GM13976 (cell line): ENCODE measurements at regions of chr22 and their contacts with region 1.

Region 1: GRCh38 chr22:38051900-38052862 is 5.0 kb upstream of the PICK1 start:
- DNase-seq: peak; percentile 95
- CTCF ChIP-seq: peak; percentile 83

Region 2: GRCh38 chr22:38569972-38570778 is 518.0 kb after region 1 on chr22 and contains the start of gene DMC1:
- in situ Hi-C with region 1: loop called (anchors 10 kb)
- DNase-seq: peak; percentile 100
- CTCF ChIP-seq: no peak